Lower lobe of right lung (tissue), 2 donors: ENCODE measurements at regions of chr10 and their contacts with region 1.

Region 1: GRCh38 chr10:88386821-88387773 is 196.0 kb downstream of the RNLS start:
- DNase-seq: no peak
- ATAC-seq: peak; percentile 89 to 95
- H3K4me3 ChIP-seq: peak overlapping the region; percentile 16
- H3K27ac ChIP-seq: peak overlapping the region; percentile 44
- H3K4me1 ChIP-seq: peaks cover 22% of the 10 kb centered on the region
- H3K27me3 ChIP-seq: no peaks in the 10 kb centered on the region
- CTCF ChIP-seq: no peak

Region 2: DNA sequence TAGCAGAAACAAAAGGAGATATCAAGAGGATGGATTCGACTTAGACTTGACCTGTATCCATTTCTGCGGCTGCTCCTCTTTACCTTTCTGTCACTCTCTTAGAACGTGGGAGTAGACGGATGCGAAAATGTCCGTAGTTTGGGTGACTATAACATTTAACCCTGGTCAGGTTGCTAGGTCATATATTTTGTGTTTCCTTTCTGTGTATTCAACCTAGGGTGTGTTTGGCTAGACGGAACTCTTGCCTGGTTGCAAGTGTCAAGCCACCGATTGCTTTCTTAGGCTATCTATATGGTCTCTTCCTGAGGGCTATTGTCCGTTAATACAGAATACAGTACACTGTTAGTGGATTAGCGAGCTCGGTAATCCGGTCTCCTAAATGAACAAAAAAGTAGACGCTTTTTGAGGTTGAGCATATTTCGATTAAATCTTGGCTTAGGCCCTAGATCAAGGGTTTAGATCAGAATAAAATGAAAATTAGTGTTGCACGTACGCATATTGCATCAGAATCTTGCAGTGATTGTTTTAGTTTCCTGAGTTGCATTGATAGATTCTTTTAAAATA is 522.5 kb before region 1 on chr10:
- intact Hi-C with region 1: loop called (anchors 5 kb)
- DNase-seq: no peak
- ATAC-seq: no peak
- H3K4me3 ChIP-seq: peak overlapping the region; percentile 95
- H3K27ac ChIP-seq: peak overlapping the region; percentile 95
- H3K4me1 ChIP-seq: peaks cover 33% of the 10 kb centered on the region
- H3K27me3 ChIP-seq: no peaks in the 10 kb centered on the region
- CTCF ChIP-seq: no peak

Region 3: GRCh38 chr10:88082806-88083596 is 304.1 kb before region 1 on chr10:
- intact Hi-C with region 1: no loop called
- DNase-seq: no peak
- ATAC-seq: peak; percentile 36 to 51
- H3K4me3 ChIP-seq: no peak overlapping the region
- H3K27ac ChIP-seq: no peak overlapping the region
- H3K4me1 ChIP-seq: peaks cover 29% of the 10 kb centered on the region
- H3K27me3 ChIP-seq: no peaks in the 10 kb centered on the region
- CTCF ChIP-seq: no peak

Region 4: DNA sequence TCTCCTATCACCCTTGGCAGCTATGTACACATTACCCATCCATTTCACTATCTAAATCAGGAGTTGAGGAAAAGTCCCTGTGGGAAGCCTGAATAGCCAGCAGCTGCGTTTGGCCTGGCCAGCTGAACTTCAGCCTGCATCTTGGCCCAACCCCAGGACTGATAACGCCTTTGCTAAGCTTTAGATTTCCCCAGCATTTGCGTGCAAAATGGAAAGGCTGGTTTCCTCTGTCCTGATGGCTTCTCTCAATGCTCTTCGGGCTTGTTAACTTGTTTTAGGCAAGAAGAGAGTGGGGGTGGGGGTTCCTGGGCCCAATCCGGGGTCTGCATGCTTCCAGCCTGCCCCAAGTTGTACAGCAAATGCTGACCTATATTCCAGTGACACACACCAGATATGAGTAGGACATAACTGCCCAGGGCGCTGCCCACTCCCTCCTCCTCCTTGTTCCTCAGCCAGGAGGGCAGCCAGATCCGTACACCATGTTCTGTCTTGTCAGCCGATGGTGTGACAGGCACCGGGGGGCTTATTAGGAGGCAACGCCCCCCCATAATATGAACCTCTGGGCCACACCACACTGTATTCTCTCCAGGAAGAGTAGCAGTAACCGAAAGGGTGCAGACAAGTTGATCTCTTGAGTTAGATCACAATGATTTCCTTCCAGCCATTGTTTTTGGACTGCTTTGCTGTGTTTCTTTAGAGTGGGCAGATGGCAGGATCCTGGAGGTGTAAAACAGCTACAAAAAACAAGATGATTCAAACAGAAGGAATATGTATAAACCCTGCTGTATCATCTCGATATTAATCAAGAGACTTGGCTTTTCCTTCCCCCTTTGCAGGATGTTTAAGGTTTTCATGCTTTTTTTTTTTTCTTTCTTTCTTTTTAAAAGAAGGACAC is 143.0 kb before region 1 on chr10:
- intact Hi-C with region 1: no loop called
- DNase-seq: peak; percentile 46
- ATAC-seq: peak; percentile 66 to 71
- H3K4me3 ChIP-seq: no peak overlapping the region
- H3K27ac ChIP-seq: peak overlapping the region; percentile 54
- H3K4me1 ChIP-seq: peaks cover 39% of the 10 kb centered on the region
- H3K27me3 ChIP-seq: no peaks in the 10 kb centered on the region
- CTCF ChIP-seq: no peak

Region 5: GRCh38 chr10:88361494-88361893 is 25.6 kb before region 1 on chr10:
- intact Hi-C with region 1: no loop called
- DNase-seq: no peak
- ATAC-seq: no peak
- H3K4me3 ChIP-seq: no peak overlapping the region
- H3K27ac ChIP-seq: no peak overlapping the region
- H3K4me1 ChIP-seq: no peaks in the 10 kb centered on the region
- H3K27me3 ChIP-seq: no peaks in the 10 kb centered on the region
- CTCF ChIP-seq: no peak

Region 6: GRCh38 chr10:89129911-89130310 is 742.8 kb after region 1 on chr10:
- intact Hi-C with region 1: no loop called
- DNase-seq: peak; percentile 58
- ATAC-seq: peak; percentile 54 to 77
- H3K4me3 ChIP-seq: no peak overlapping the region
- H3K27ac ChIP-seq: no peak overlapping the region
- H3K4me1 ChIP-seq: no peaks in the 10 kb centered on the region
- H3K27me3 ChIP-seq: no peaks in the 10 kb centered on the region
- CTCF ChIP-seq: no peak